ENCODE measurements at regions of chr1 and their contacts with region 1.

Region 1: DNA sequence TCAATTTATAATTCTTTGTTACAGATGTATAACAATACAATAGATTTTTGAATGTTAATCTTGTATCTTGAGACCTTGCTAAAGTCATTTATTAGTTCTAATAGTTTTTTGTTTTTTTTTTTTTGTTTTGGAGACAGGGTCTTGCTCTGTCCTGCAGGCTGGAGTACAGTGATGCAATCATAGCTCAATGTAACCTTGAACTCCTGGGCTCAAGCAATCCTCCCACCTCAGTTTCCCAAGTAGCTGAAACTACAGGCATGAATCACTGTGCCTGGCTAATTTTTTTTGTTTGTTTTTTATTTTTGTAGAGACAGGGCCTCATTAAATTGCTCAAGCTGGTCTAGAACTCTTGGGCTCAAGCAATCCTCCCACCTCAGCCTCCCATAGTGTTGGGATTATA is 26.2 kb upstream of the DIPK1A start:
- DNase-seq: no peak
- ATAC-seq: no peak
- H3K4me3 ChIP-seq: no peak overlapping the region
- H3K27ac ChIP-seq: no peak overlapping the region
- H3K4me1 ChIP-seq: no peaks in the 10 kb centered on the region
- H3K27me3 ChIP-seq: no peaks in the 10 kb centered on the region
- CTCF ChIP-seq: no peak
- EP300 ChIP-seq: no peak
- POLR2A ChIP-seq: no peak
- RAD21 ChIP-seq: no peak

Region 2: DNA sequence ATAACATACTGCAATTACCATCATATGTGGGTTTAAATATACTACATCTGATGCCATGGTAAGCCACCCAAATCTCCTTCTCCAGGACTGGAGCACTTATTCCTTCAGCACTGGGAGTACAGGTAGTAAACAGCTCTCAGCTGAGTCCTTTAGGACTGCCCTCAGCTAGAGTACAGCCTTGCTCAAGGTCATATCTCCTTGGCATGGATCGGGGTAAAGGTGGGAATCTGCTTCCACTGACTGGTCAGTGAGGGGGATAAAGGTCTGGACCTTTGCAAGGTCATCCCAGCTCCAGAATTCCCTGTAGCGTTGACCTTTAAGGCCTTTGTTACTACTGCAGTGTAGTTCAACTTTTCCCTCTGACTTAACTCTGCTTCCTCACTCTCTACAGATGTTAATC is 116.9 kb before region 1 on chr1:
- CTCF ChIA-PET with region 1: no interaction called
- POLR2A ChIA-PET with region 1: no interaction called
- RAD21 ChIA-PET with region 1: no interaction called
- SMC1A ChIA-PET with region 1: no interaction called
- in situ Hi-C with region 1: no loop called
- intact Hi-C with region 1: no loop called
- DNase-seq: no peak
- ATAC-seq: no peak
- H3K4me3 ChIP-seq: no peak overlapping the region
- H3K27ac ChIP-seq: no peak overlapping the region
- H3K4me1 ChIP-seq: no peaks in the 10 kb centered on the region
- H3K27me3 ChIP-seq: no peaks in the 10 kb centered on the region
- CTCF ChIP-seq: no peak
- EP300 ChIP-seq: no peak
- POLR2A ChIP-seq: no peak
- RAD21 ChIP-seq: no peak

Region 3: DNA sequence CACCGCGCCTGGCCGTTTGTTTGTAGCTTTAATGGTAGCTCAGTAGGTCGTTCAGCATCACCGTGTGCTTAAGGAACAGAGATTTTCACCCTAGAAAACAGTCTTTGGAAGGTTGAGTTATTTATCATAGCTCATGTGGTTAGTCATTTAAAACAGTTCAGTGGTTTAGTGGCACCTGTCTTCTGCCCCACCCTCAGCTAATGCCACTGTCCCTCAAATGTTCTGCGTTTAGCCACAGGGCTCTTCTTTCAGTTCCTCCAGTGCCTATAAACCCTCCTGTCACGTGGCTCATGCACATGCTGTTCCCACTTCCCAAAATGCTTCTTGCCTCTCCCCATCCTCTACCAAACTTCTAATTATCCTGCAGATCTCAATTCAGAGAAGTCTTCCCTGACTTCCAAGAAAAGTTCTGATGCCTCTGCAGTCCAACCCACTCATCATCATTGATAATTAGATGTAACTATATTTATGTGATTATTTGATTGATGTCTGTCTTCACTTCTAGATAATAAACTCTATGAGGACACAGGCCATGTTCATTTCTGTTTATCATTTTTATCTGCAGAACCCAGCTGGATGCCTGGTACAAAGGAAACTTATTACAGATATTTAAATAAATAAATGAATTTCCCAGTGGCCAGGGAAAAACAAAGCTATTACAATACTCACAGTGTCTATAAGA is 11.8 kb before region 1 on chr1:
- CTCF ChIA-PET with region 1: interaction called, 304 read pairs
- POLR2A ChIA-PET with region 1: interaction called, 13 read pairs
- RAD21 ChIA-PET with region 1: interaction called, 48 read pairs
- SMC1A ChIA-PET with region 1: interaction called, 253 read pairs
- in situ Hi-C with region 1: no loop called
- intact Hi-C with region 1: no loop called
- DNase-seq: peak; percentile 97
- ATAC-seq: peak; percentile 76
- H3K4me3 ChIP-seq: 0 out of 2 replicates have a peak overlapping the region, but pooled peaks have one; percentile 58
- H3K27ac ChIP-seq: peak overlapping the region; percentile 89
- H3K4me1 ChIP-seq: peaks cover 50% of the 10 kb centered on the region
- H3K27me3 ChIP-seq: no peaks in the 10 kb centered on the region
- CTCF ChIP-seq: no peak
- EP300 ChIP-seq: peak; percentile 89 to 92
- POLR2A ChIP-seq: no peak
- RAD21 ChIP-seq: no peak

Region 4: DNA sequence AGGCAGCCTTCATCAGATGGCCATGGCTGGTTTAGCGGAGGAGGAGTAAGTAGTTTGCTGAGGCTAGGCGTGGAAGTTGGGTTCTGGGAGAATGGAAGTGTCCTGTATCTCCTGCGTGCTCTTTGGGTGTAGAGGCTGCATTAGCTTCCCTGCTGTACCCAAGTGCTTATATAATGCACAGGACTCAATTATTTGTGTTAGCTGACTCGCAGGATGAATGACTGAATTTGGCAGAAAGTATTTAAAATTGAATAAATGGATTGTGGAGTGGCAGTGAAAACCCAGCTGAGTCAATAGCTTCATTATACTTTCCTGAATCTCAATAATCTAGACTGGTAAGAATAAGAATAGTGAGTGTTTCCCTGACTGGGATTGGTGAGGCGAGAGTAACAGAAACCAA is 877.8 kb after region 1 on chr1:
- CTCF ChIA-PET with region 1: no interaction called
- POLR2A ChIA-PET with region 1: no interaction called
- RAD21 ChIA-PET with region 1: no interaction called
- SMC1A ChIA-PET with region 1: no interaction called
- in situ Hi-C with region 1: no loop called
- intact Hi-C with region 1: no loop called
- DNase-seq: no peak
- ATAC-seq: no peak
- H3K4me3 ChIP-seq: no peak overlapping the region
- H3K27ac ChIP-seq: no peak overlapping the region
- H3K4me1 ChIP-seq: no peaks in the 10 kb centered on the region
- H3K27me3 ChIP-seq: no peaks in the 10 kb centered on the region
- CTCF ChIP-seq: no peak
- EP300 ChIP-seq: no peak
- POLR2A ChIP-seq: no peak
- RAD21 ChIP-seq: no peak